ENCODE measurements at regions of chr19 and their contacts with region 1.

Region 1: GRCh38 chr19:41775360-41775695 is 20.0 kb downstream of the CEACAM6 start:
- DNase-seq: no peak
- H3K4me3 Mint-ChIP-seq: no peak overlapping the region
- H3K27ac Mint-ChIP-seq: no peak overlapping the region
- H3K4me1 Mint-ChIP-seq: peaks cover 27% of the 10 kb centered on the region
- H3K27me3 Mint-ChIP-seq: peaks cover 80% of the 10 kb centered on the region

Region 2: GRCh38 chr19:41785653-41786052 is 10.3 kb after region 1 on chr19:
- CTCF ChIA-PET with region 1: interaction called, 12 read pairs
- POLR2A ChIA-PET with region 1: interaction called, 6 read pairs
- DNase-seq: peak; percentile 79
- H3K4me3 Mint-ChIP-seq: no peak overlapping the region
- H3K27ac Mint-ChIP-seq: no peak overlapping the region
- H3K4me1 Mint-ChIP-seq: peaks cover 17% of the 10 kb centered on the region
- H3K27me3 Mint-ChIP-seq: peaks cover 55% of the 10 kb centered on the region